Activated T-helper 2 cell treated with anti-CD3 and anti-CD28 coated beads, Interferon-gamma antibody, Interleukin-2, Interleukin-4, amounts not matched to agents 10 μg/mL and 5 μg/mL and 100 μg/mL, durations not matched to agents 14 hours and 24 hours and 36 hours (primary cell): ENCODE measurements at regions of chr9 and their contacts with region 1.

Region 1: DNA sequence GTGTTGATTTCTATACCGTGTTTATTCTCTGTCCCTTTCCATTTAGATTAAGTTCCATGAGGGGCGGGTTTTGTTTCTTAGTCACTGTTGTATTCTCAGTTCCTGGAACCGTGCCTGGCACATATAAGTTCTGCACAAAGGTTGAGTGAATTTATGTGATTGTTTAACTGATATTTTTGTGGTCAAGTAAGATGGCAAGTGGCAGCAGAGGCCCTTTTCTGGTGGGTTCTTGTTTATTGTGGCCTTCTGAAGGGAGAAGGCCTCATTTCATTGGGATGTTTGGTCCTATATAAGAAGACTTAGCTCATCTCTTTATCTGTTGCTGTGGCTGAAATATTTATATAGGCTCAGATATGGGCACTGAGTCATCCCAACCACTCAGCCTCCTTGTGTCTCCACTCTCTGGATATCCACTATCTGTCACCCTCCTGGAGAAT is 262.5 kb downstream of the PSAT1 start:
- DNase-seq: no peak
- H3K4me3 Mint-ChIP-seq: no peak overlapping the region
- H3K27ac Mint-ChIP-seq: no peak overlapping the region
- H3K4me1 Mint-ChIP-seq: no peaks in the 10 kb centered on the region
- H3K27me3 Mint-ChIP-seq: no peaks in the 10 kb centered on the region

Region 2: DNA sequence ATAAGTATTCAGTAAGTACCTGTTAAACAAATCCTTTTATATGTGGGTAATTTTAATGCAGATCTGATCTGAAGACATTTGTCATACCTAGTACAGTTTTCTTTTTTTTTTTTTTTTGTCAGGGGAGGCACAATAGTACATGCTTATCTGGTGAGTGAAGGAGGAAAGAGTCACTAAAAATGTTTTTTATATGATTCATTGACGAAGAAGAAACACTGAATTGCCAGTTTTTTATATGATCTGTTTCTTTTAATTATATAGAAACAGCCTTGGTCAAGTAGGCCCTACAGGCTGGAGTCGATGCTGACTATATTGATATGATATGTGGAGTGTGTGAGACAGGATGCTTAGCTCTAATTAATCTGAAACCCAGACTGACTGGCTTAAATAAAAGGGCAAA is 52.6 kb after region 1 on chr9:
- intact Hi-C with region 1: loop called (anchors 10 kb)
- DNase-seq: no peak
- H3K4me3 Mint-ChIP-seq: no peak overlapping the region
- H3K27ac Mint-ChIP-seq: no peak overlapping the region
- H3K4me1 Mint-ChIP-seq: no peaks in the 10 kb centered on the region
- H3K27me3 Mint-ChIP-seq: no peaks in the 10 kb centered on the region